AG04450 (cell line): ENCODE measurements at regions of chr7 and their contacts with region 1.

Region 1: GRCh38 chr7:47818796-47819606 is 129.3 kb downstream of the PKD1L1 start:
- DNase-seq: peak; percentile 54
- H3K4me3 ChIP-seq: no peak overlapping the region
- H3K27ac ChIP-seq: no peak overlapping the region
- H3K27me3 ChIP-seq: no peaks in the 10 kb centered on the region
- CTCF ChIP-seq: peak; percentile 98

Region 2: GRCh38 chr7:47435889-47436312 is 383.1 kb before region 1 on chr7:
- CTCF ChIA-PET with region 1: interaction called, 32 read pairs
- POLR2A ChIA-PET with region 1: no interaction called
- DNase-seq: peak; percentile 47
- H3K4me3 ChIP-seq: no peak overlapping the region
- H3K27ac ChIP-seq: no peak overlapping the region
- H3K27me3 ChIP-seq: no peaks in the 10 kb centered on the region
- CTCF ChIP-seq: peak; percentile 66

Region 3: DNA sequence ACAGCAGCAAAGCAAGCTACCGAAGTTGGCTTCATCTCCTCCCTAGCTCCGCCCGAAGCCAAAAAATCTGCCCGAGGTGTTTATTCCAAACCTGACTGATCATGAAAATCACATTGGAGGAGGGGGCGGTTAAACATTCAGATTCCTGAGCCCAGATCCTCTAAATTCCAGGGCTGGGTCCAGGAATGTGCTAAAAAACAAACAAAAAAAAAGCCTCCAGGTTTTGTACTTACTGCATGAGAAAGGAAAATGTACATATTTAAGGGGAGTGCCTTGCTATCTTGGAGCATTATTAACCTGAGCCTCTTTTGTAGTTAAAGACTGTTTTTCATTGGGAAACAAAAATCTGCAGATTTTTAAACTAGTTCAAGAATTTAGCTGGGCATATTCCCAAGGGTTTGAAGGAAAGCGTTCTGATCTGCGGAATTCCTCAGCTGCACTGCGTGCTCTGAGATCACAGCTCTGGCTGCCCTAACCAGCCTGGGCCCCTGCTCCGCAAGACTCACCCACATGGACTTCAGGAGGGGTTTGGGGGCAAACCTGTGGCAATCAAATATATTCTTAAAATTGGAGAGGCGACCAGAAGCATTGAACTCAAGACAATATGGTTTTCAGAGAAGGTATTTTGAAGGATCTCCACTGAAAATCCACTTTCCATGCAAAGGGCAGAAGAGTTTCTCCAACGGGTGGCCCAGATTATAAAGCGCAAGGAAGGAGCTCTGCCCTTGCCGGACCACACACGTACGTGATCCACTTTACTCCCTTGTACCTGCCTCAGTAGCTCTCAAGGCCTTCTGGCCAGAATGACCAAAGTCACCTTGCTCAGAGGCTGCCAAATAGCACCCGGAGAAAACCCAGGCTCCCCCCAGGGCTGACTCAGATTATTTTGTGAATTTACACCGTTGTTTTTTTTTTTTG is 227.1 kb before region 1 on chr7:
- CTCF ChIA-PET with region 1: interaction called, 12 read pairs
- POLR2A ChIA-PET with region 1: no interaction called
- DNase-seq: peak; percentile 68
- H3K4me3 ChIP-seq: no peak overlapping the region
- H3K27ac ChIP-seq: peak overlapping the region; percentile 92
- H3K27me3 ChIP-seq: no peaks in the 10 kb centered on the region
- CTCF ChIP-seq: no peak

Region 4: GRCh38 chr7:47653550-47654351 is 165.2 kb before region 1 on chr7:
- CTCF ChIA-PET with region 1: interaction called, 10 read pairs
- POLR2A ChIA-PET with region 1: no interaction called
- DNase-seq: no peak
- H3K4me3 ChIP-seq: no peak overlapping the region
- H3K27ac ChIP-seq: peak overlapping the region; percentile 43
- H3K27me3 ChIP-seq: no peaks in the 10 kb centered on the region
- CTCF ChIP-seq: peak; percentile 18; the same call in 1 of the 2 replicates

Region 5: DNA sequence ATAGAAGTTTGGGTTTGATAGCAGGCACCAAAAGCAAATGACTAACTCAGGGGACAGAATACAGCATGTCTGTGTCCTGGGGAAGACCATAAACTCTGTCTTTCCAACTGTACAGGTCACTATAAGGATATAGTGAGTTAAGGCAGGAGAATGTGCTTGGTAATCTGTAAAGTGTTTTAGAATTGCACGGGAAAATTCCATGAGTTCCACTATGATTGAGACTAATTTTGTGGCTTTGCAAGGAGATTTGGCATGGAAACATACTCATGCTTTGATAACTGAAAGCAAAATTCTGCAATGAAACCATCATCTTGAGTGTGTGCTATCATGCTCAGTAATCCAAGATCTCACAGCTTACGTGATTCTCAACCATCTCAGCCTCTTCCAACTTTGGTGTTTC is 23.4 kb before region 1 on chr7:
- CTCF ChIA-PET with region 1: interaction called, 12 read pairs
- POLR2A ChIA-PET with region 1: no interaction called
- DNase-seq: peak; percentile 78
- H3K4me3 ChIP-seq: peak overlapping the region; percentile 56
- H3K27ac ChIP-seq: peak overlapping the region; percentile 94
- H3K27me3 ChIP-seq: no peaks in the 10 kb centered on the region
- CTCF ChIP-seq: no peak

Region 6: DNA sequence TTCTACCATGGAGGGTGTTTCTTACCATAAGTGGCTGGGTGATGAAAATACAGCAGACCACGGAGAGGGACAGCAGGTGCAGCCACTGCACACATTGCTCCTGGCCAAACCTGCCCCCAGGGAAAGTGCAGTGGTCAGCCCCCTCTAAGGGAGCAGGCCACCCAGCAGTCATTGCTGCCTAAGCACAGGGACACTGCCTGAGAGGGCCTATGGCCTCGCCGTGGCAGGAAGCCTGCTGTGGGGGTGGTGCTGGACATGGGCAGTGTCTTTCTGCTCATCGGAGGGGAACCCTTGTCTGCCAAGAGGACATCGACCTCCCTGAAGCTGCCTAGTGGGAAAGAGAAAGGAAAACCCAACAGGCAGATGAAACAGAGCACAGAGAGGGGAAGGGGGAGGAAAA is 11.0 kb after region 1 on chr7:
- CTCF ChIA-PET with region 1: interaction called, 12 read pairs
- POLR2A ChIA-PET with region 1: no interaction called
- DNase-seq: no peak
- H3K4me3 ChIP-seq: no peak overlapping the region
- H3K27ac ChIP-seq: no peak overlapping the region
- H3K27me3 ChIP-seq: no peaks in the 10 kb centered on the region
- CTCF ChIP-seq: no peak